HAP-1 (cell line): ENCODE measurements at regions of chr1 and their contacts with region 1.

Region 1: GRCh38 chr1:16078925-16079656 is 5.6 kb upstream of the FAM131C start:
- DNase-seq: peak; percentile 76 to 88
- H3K4me3 ChIP-seq: no peak overlapping the region
- H3K4me1 ChIP-seq: no peaks in the 10 kb centered on the region
- H3K27me3 ChIP-seq: no peaks in the 10 kb centered on the region

Region 2: GRCh38 chr1:16181887-16182719 is 103.0 kb after region 1 on chr1:
- in situ Hi-C with region 1: loop called (anchors 5 kb)
- DNase-seq: no peak
- H3K4me3 ChIP-seq: no peak overlapping the region
- H3K4me1 ChIP-seq: no peaks in the 10 kb centered on the region
- H3K27me3 ChIP-seq: no peaks in the 10 kb centered on the region

Region 3: DNA sequence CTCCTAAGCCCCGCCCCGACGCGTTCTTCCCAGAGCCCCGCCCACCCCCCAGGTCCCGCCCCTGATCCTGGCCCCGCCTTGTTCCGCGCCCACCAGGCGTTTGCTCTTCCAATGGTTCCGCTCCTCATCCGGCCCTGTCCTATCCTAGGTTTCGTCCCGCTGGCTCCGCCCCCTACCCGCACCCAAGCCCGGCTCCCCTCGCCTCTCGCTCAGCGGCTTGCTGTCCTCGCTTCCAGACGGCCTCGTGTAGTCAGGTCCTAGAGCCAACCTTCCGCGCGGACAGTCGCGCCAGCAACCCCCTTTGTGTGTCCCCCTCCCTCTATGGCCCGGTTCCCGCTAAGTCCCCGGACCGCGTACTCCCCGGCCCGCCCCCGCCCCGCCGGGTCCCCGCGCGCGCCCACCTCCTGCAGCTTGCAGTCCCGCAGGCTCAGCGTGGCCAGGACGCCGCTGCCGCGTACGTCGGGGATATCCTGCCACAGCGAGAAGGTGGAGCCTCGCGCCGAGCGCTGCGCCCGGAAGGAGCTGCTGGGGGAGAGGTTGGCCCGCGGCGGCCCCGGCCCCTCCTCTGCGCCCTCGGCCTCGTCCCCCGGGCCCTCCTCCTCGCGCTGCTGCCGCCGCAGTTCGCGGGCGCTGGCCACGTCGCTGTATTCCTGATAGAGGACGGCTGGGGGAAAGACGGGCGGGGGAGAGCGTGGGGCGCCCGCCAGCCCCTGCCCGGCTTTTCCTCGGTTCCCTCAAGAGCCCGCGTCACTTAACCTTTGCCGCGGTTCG is 127.6 kb after region 1 on chr1:
- in situ Hi-C with region 1: no loop called
- DNase-seq: peak; percentile 98 to 99
- H3K4me3 ChIP-seq: peak overlapping the region; percentile 40
- H3K4me1 ChIP-seq: peaks cover 11% of the 10 kb centered on the region
- H3K27me3 ChIP-seq: no peaks in the 10 kb centered on the region

Region 4: GRCh38 chr1:16366722-16367257 is 287.7 kb after region 1 on chr1 and contains the start of gene SZRD1:
- in situ Hi-C with region 1: loop called (anchors 10 kb)
- DNase-seq: peak; percentile 96 to 97
- H3K4me3 ChIP-seq: peak within 1 kb of the TSS; percentile 97
- H3K4me1 ChIP-seq: peaks cover 13% of the 10 kb centered on the region
- H3K27me3 ChIP-seq: no peaks in the 10 kb centered on the region